ENCODE measurements at regions of chr10 and their contacts with region 1.

Region 1: GRCh38 chr10:44959247-44960087 is at the start of gene RASSF4:
- DNase-seq: peak; percentile 91
- ATAC-seq: peak; percentile 98
- H3K4me3 ChIP-seq: peak within 1 kb of the TSS; percentile 80
- H3K27ac ChIP-seq: peak within 1 kb of the TSS; percentile 43
- H3K4me1 ChIP-seq: peaks cover 19% of the 10 kb centered on the region
- H3K27me3 ChIP-seq: no peaks in the 10 kb centered on the region
- CTCF ChIP-seq: no peak
- total RNA-seq, gene RASSF4: 7.7 and 8.7 TPM in 2 replicates

Region 2: GRCh38 chr10:44974628-44975431 is 15.4 kb after region 1 on chr10:
- CTCF ChIA-PET with region 1: no interaction called
- POLR2A ChIA-PET with region 1: interaction called, 4 read pairs
- intact Hi-C with region 1: loop called (anchors 1 kb)
- DNase-seq: peak; percentile 74
- ATAC-seq: peak; percentile 79
- H3K4me3 ChIP-seq: peak overlapping the region; percentile 91
- H3K27ac ChIP-seq: peak overlapping the region; percentile 28
- H3K4me1 ChIP-seq: peaks cover 47% of the 10 kb centered on the region
- H3K27me3 ChIP-seq: no peaks in the 10 kb centered on the region
- CTCF ChIP-seq: peak; percentile 98

Measured in PC-3 (cell line).